ENCODE measurements at regions of chr16 and their contacts with region 1.

Region 1: DNA sequence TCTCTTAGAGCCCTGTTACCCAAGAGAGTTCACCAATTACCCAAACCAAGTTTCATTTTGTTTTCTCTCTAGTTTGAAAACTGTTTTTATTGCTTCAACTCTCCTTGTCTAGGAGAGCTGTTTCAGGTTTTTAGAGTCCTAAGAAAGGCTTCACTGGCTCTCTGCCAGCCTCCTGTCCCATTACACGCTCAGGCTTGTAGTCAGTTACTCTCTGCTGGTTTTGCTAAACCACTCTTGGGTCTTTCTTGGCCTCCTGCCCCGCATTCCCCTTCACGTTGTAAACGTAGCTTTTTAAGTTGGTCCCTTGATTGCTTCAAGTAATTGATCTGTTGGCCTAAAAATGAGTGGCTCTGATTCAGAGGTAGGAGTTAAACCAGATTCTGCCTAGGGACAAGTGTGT is 529.1 kb downstream of the MAF start:
- DNase-seq: no peak
- H3K4me3 Mint-ChIP-seq: no peak overlapping the region
- H3K27ac Mint-ChIP-seq: peak overlapping the region; percentile 84
- H3K4me1 Mint-ChIP-seq: peaks cover 74% of the 10 kb centered on the region
- H3K27me3 Mint-ChIP-seq: peaks cover 4% of the 10 kb centered on the region

Region 2: DNA sequence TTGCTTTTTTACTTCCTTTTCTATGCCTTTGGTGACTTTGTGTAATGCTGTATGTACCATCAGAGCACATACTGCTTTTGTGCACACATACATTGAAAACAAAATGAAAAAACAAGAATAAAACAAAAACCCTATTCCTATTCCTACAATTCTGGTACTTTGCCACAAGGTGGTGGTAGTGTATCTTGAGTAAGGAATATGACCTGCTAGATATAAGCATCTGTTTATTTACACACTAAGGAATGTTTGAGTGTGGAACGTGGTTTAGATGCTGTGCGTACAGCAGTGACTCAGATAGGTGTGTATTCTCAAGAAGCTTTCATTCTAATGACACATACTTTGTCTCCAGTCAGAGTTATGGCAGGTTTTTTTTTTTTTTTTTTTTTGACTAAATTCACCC is 365.7 kb before region 1 on chr16:
- CTCF ChIA-PET with region 1: no interaction called
- POLR2A ChIA-PET with region 1: interaction called, 3 read pairs
- intact Hi-C with region 1: loop called (anchors 10 kb)
- DNase-seq: peak; percentile 51
- H3K4me3 Mint-ChIP-seq: no peak overlapping the region
- H3K27ac Mint-ChIP-seq: peak overlapping the region; percentile 87
- H3K4me1 Mint-ChIP-seq: peaks cover 16% of the 10 kb centered on the region
- H3K27me3 Mint-ChIP-seq: no peaks in the 10 kb centered on the region

Region 3: GRCh38 chr16:78877114-78877655 is 194.2 kb before region 1 on chr16:
- CTCF ChIA-PET with region 1: no interaction called
- POLR2A ChIA-PET with region 1: no interaction called
- intact Hi-C with region 1: no loop called
- DNase-seq: no peak
- H3K4me3 Mint-ChIP-seq: no peak overlapping the region
- H3K27ac Mint-ChIP-seq: no peak overlapping the region
- H3K4me1 Mint-ChIP-seq: no peaks in the 10 kb centered on the region
- H3K27me3 Mint-ChIP-seq: no peaks in the 10 kb centered on the region

Region 4: GRCh38 chr16:78962457-78962929 is 108.9 kb before region 1 on chr16:
- CTCF ChIA-PET with region 1: interaction called, 4 read pairs
- POLR2A ChIA-PET with region 1: interaction called, 18 read pairs
- intact Hi-C with region 1: loop called (anchors 1 kb)
- DNase-seq: peak; percentile 52
- H3K4me3 Mint-ChIP-seq: peak overlapping the region; percentile 3
- H3K27ac Mint-ChIP-seq: peak overlapping the region; percentile 92
- H3K4me1 Mint-ChIP-seq: peaks cover 59% of the 10 kb centered on the region
- H3K27me3 Mint-ChIP-seq: no peaks in the 10 kb centered on the region

Region 5: GRCh38 chr16:79047229-79047983 is 24.0 kb before region 1 on chr16:
- CTCF ChIA-PET with region 1: interaction called, 3 read pairs
- POLR2A ChIA-PET with region 1: no interaction called
- intact Hi-C with region 1: loop called (anchors 2 kb)
- DNase-seq: peak; percentile 32
- H3K4me3 Mint-ChIP-seq: no peak overlapping the region
- H3K27ac Mint-ChIP-seq: peak overlapping the region; percentile 50
- H3K4me1 Mint-ChIP-seq: peaks cover 44% of the 10 kb centered on the region
- H3K27me3 Mint-ChIP-seq: no peaks in the 10 kb centered on the region

Region 6: DNA sequence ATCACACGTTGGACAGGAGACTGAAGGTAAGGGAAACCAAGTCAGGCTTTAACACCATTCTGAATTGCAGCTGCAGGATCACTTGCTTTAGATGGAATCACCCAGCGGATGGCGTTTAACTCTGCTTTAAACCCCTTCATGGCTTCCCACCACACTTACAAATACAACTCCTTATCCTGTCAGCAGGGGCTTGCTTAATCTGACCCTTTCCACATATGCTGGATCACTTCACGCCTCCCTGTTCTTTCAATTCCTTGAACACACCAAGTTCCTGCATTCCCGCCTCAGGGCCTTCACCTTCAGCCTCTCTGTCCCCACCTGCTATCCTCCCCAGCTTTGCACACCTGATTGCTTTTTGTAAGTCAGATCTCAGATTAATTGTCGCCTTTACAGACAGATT is 86.9 kb after region 1 on chr16:
- CTCF ChIA-PET with region 1: no interaction called
- POLR2A ChIA-PET with region 1: no interaction called
- intact Hi-C with region 1: loop called (anchors 5 kb)
- DNase-seq: no peak
- H3K4me3 Mint-ChIP-seq: no peak overlapping the region
- H3K27ac Mint-ChIP-seq: no peak overlapping the region
- H3K4me1 Mint-ChIP-seq: peaks cover 35% of the 10 kb centered on the region
- H3K27me3 Mint-ChIP-seq: no peaks in the 10 kb centered on the region

Region 7: DNA sequence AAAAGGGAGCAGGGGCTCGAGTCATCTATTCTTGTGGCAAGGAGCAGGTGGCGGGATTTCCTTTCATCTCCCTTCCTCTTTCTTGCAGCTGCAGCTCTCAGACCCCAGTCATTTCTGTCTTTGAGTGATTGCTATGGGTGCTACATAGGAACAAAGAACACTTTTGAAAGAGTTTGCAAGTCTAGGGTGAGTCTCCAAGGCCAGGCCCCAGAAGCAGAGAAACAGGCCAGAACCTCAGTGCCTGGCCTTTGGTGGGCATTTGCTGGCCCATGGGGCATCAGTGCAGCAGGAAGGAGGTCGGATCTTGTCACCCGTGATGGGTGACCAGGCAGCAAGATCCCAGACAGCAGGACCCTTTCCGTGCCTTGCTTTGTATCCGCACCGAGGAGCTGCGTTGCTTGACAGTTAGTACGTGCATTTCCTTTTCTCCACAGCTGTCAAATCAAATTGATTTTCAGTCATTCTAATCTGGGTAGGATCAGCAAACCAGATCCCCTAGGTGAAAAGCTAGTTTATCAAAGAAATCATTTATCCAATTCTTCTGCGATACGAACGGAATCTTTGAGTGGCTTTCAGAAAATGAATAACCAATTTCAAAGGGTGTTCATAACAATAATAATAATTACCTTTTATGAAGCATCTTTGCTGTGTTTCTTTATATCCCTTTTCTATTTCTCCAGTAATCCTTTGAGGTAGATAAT is 773.8 kb after region 1 on chr16:
- CTCF ChIA-PET with region 1: no interaction called
- POLR2A ChIA-PET with region 1: no interaction called
- intact Hi-C with region 1: loop called (anchors 10 kb)
- DNase-seq: peak; percentile 58
- H3K4me3 Mint-ChIP-seq: peak overlapping the region; percentile 45
- H3K27ac Mint-ChIP-seq: peak overlapping the region; percentile 69
- H3K4me1 Mint-ChIP-seq: peaks cover 40% of the 10 kb centered on the region
- H3K27me3 Mint-ChIP-seq: peaks cover 5% of the 10 kb centered on the region